Left ventricle myocardium superior (tissue), 1 donor: ENCODE measurements at regions of chr4 and their contacts with region 1.

Region 1: DNA sequence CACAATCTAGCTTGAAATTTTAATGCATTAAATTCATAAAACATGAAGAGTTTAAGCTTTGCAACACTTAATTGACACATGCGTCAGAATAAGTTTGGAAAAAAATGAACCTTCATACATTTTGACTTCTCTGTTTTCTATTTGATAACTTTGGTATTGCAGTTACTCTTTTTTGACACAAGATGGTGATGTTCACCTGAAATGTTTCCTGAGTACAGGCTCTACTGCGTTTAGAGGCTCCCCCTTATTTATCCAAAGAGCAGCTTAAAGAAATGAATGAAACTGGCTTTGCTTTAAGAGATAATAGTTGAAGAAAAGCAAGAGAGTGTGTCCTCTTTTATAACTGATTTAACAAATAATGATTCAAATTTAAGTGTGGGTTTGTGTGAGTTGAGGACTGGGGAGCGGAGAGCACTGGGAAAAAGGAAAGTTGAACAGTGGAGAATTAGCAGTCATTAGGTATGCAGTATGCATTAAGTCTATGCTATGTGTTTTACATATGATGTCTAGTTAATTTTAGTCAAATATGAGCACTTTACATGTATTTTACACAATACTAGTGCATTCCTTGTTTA is 180.6 kb upstream of the NUDT6 start:
- DNase-seq: no peak
- ATAC-seq: peak; percentile 69

Region 2: DNA sequence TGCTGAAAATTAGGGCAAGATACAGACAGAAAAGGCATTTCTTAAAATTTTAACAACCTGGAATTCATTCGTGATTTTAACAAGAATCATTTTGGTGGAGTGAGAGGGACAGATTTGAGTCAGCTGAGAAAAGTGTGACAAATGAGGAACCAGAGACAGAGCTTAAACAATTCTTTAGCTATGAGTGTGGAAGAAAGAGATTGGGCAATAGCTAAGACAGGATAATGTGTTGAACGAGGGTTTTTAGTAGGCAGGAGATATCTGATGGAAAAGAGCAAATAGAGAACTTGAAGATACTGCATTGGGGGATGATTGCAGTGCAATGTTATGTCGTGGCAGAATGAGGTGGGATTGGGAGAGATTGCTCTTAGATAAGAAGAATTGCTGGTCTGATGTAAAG is 129.5 kb after region 1 on chr4:
- intact Hi-C with region 1: no loop called
- DNase-seq: no peak
- ATAC-seq: no peak

Region 3: DNA sequence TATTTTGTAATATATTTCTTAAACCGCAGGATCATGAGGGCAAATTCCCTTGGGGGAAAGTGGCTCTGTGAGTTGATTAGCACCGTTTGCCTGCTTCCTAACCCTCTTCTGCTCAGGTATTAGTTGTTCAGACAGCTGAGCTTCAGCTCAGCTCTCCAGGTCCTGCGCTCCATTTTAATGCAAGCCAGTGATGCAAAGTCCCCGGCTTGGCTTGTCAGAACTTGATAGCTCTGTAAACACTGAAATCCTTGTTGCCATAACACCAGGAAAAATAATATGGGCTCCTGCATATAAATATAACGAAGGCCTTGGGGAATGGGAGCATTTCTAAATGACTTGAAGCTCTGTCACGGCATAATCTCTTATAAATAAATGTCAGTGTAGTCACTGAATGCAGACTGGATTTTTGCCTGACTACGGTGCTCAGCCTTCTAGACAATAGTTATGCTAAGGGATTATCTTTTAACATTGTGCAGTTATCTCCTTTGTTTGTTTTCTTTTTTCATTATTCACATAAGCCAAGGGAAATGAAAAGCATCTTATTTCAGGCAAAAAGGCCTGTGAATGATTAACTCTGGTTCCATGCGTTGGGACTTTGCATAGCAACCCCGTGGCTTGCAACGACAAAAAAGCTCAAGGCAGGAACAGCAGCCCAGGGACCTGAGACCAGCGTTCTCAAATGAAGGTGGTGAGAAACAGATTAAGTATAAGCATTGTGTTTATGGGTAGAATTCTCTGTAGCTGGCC is 546.8 kb after region 1 on chr4:
- intact Hi-C with region 1: loop called (anchors 10 kb)
- DNase-seq: peak; percentile 26
- ATAC-seq: peak; percentile 78

Region 4: GRCh38 chr4:124111922-124112321 is 1008.9 kb after region 1 on chr4:
- intact Hi-C with region 1: loop called (anchors 10 kb)
- DNase-seq: no peak
- ATAC-seq: peak; percentile 93

Region 5: GRCh38 chr4:124262211-124263179 is 1159.5 kb after region 1 on chr4:
- intact Hi-C with region 1: loop called (anchors 10 kb)
- DNase-seq: peak; percentile 23
- ATAC-seq: peak; percentile 82